Mammary epithelial cell (primary cell): ENCODE measurements at regions of chr2 and their contacts with region 1.

Region 1: DNA sequence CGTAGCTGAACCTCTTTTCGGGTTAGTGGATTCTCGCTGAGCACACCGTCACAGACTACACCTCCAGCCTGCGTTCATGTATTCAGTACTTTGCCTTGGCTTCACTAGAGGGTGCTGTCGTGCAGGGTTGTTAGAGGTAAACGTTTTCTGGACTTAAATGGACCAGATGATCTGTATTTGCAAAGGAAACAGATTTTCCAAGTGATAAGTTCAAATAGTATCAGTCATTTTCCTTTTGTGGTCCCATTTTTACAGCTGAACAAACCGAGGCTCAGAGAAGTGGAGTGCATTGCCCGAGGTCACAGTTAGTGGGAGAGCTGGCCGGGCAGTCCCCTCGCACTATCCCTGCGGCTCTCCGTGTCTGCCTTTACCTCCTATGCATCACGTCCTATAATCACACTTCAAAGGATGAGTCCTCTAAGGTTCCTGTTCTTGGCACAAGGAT is 125.9 kb downstream of the MAP4K4 start:
- DNase-seq: peak; percentile 75
- H3K4me3 ChIP-seq: peak overlapping the region in 2 of 3 experiments; percentile 3 to 4
- H3K27ac ChIP-seq: peak overlapping the region; percentile 88
- H3K4me1 ChIP-seq: peaks cover 81% of the 10 kb centered on the region
- H3K27me3 ChIP-seq: no peaks in the 10 kb centered on the region
- CTCF ChIP-seq: peak; percentile 79 to 86

Region 2: GRCh38 chr2:101328474-101329007 is 494.8 kb before region 1 on chr2:
- CTCF ChIA-PET with region 1: no interaction called
- dilution Hi-C with region 1: no loop called
- in situ Hi-C with region 1: no loop called
- intact Hi-C with region 1: loop called (anchors 5 kb)
- DNase-seq: peak; percentile 86
- H3K4me3 ChIP-seq: peak overlapping the region in 2 of 3 experiments; percentile 10 to 21
- H3K27ac ChIP-seq: peak overlapping the region; percentile 80
- H3K4me1 ChIP-seq: peaks cover 40% of the 10 kb centered on the region
- H3K27me3 ChIP-seq: no peaks in the 10 kb centered on the region
- CTCF ChIP-seq: no peak

Region 3: DNA sequence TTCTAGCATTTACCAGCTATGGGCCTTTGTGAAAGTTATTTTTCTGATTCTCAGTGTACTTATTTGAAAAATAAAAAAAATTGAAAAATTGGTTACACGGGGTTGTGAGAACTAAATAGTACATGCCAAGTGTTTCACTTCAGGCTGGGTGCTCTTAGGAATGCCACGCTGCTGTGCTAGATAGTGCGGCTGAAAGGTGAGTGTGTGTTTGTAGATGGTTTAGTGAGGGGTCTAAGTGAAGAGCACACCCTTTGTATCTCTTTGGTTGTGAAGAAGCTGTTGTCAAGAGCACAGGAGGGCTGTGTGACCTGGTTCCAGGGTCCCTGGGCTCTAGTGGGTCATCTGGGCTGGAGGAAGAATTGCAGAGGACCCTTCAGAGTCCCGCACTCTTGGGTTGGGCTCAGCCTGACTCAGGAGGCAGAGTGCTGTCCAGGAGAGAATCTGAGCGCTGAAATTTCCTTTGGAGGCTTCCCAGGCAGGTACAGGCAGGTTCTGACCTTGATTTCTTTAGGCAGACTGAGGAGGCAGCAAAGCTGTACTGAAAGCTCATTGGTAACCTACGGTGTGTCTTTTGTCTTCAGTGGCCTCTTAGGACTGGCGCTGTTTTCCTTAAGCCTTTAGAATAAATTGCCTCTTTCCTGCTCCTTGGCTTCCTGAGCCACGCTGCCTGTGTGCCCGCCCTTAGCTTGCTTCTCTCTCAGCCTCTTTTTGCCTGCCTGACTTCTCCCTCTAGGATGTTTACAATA is 81.4 kb before region 1 on chr2:
- CTCF ChIA-PET with region 1: interaction called, 3 read pairs
- dilution Hi-C with region 1: no loop called
- in situ Hi-C with region 1: no loop called
- intact Hi-C with region 1: loop called (anchors 5 kb)
- DNase-seq: peak; percentile 92
- H3K4me3 ChIP-seq: peak overlapping the region; percentile 7 to 26 (median 24)
- H3K27ac ChIP-seq: peak overlapping the region; percentile 77
- H3K4me1 ChIP-seq: peaks cover 81% of the 10 kb centered on the region
- H3K27me3 ChIP-seq: no peaks in the 10 kb centered on the region
- CTCF ChIP-seq: peak in 1 of 2 donors; percentile 19

Region 4: GRCh38 chr2:101806123-101806522 is 17.2 kb before region 1 on chr2:
- CTCF ChIA-PET with region 1: no interaction called
- dilution Hi-C with region 1: no loop called
- in situ Hi-C with region 1: no loop called
- intact Hi-C with region 1: loop called (anchors 2 kb)
- DNase-seq: peak; percentile 64
- H3K4me3 ChIP-seq: no peak overlapping the region
- H3K27ac ChIP-seq: peak overlapping the region; percentile 70
- H3K4me1 ChIP-seq: peaks cover 52% of the 10 kb centered on the region
- H3K27me3 ChIP-seq: no peaks in the 10 kb centered on the region
- CTCF ChIP-seq: no peak